Naive thymus-derived CD4-positive, alpha-beta T cell (primary cell): ENCODE measurements at regions of chr11 and their contacts with region 1.

Region 1: DNA sequence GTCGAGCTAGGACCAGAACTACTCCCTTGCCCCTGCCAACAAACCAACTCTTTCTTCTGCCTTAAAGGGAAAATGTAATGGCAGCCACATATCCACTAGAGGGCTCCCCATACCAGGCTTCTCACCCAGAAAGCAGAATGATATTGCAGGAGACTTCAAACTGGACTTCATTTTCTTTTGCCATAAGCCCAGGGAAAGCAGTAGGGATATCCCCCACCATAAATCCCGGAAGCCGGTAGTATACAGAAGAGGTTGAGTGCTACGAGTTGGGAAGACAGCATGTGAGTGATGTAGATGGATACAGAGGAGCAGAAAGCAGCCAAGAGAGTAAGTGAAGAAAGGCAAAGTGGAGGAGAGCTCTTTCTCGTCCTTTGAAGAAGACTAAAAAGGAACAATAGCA is 12.1 kb downstream of the PLAAT5 start:
- DNase-seq: peak; percentile 20 to 74 (median 65)
- ATAC-seq: peak; percentile 82
- H3K4me3 ChIP-seq: no peak overlapping the region
- H3K4me3 Mint-ChIP-seq: no peak overlapping the region
- H3K27ac ChIP-seq: no peak overlapping the region
- H3K27ac Mint-ChIP-seq: no peak overlapping the region
- H3K4me1 ChIP-seq: no peaks in the 10 kb centered on the region
- H3K4me1 Mint-ChIP-seq: no peaks in the 10 kb centered on the region
- H3K27me3 ChIP-seq: no peaks in the 10 kb centered on the region
- H3K27me3 Mint-ChIP-seq: peaks cover 0 to 43% (median 6%) of the 10 kb centered on the region in 5 donors

Region 2: GRCh38 chr11:63032457-63032856 is 446.4 kb before region 1 on chr11:
- CTCF ChIA-PET with region 1: no interaction called
- POLR2A ChIA-PET with region 1: no interaction called
- intact Hi-C with region 1: loop called (anchors 2 to 10 kb)
- DNase-seq: no peak
- ATAC-seq: no peak
- H3K4me3 ChIP-seq: no peak overlapping the region
- H3K4me3 Mint-ChIP-seq: no peak overlapping the region
- H3K27ac ChIP-seq: no peak overlapping the region
- H3K27ac Mint-ChIP-seq: no peak overlapping the region
- H3K4me1 ChIP-seq: no peaks in the 10 kb centered on the region
- H3K4me1 Mint-ChIP-seq: peaks cover 0 to 6% (median 0%) of the 10 kb centered on the region in 7 donors
- H3K27me3 ChIP-seq: no peaks in the 10 kb centered on the region
- H3K27me3 Mint-ChIP-seq: peaks cover 15 to 27% (median 21%) of the 10 kb centered on the region in 5 donors

Region 3: DNA sequence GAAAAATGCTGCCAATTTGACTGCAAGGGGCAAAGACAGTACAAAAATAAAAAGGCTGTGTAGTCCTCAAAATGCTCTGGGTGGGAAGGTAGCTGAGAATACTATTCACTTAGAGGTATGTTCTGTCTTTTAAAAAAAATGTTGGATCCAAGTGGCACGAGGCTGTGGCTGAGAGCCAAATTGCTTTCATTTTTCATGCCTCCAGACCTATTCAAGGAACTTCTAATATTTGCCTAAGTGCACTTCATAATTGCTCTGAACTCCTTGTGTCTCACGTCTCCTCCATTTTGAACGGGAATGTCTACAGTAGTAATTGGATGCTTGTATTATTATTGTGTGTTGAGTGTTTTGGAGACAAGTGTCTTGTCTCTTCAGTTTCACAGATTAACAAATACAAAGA is 216.3 kb before region 1 on chr11:
- CTCF ChIA-PET with region 1: no interaction called
- POLR2A ChIA-PET with region 1: no interaction called
- intact Hi-C with region 1: no loop called
- DNase-seq: no peak
- ATAC-seq: no peak
- H3K4me3 ChIP-seq: no peak overlapping the region
- H3K4me3 Mint-ChIP-seq: no peak overlapping the region
- H3K27ac ChIP-seq: no peak overlapping the region
- H3K27ac Mint-ChIP-seq: no peak overlapping the region
- H3K4me1 ChIP-seq: no peaks in the 10 kb centered on the region
- H3K4me1 Mint-ChIP-seq: peaks cover 0 to 7% (median 0%) of the 10 kb centered on the region in 7 donors
- H3K27me3 ChIP-seq: no peaks in the 10 kb centered on the region
- H3K27me3 Mint-ChIP-seq: peaks cover 7 to 33% (median 17%) of the 10 kb centered on the region in 5 donors

Region 4: DNA sequence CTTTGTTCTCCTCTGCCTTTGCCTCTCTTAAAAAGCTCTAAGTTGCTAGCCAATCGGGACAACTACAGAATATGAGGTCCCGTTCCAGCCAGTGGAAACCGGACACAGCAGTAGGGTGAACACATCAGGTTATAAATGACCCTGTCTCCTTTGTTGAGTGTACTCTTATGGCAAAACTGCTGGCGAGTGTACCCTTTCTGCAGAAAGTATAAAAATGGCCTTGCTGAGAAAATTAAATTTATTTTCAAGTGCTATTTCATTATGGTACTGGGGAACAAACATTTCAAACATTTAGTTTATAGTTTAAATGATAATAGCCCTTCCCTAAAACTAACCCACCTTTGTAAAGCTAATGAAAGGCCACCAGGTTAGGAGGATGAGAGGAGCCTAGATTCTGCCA is 21.0 kb after region 1 on chr11:
- CTCF ChIA-PET with region 1: no interaction called
- POLR2A ChIA-PET with region 1: no interaction called
- intact Hi-C with region 1: no loop called
- DNase-seq: no peak
- ATAC-seq: no peak
- H3K4me3 ChIP-seq: no peak overlapping the region
- H3K4me3 Mint-ChIP-seq: no peak overlapping the region
- H3K27ac ChIP-seq: no peak overlapping the region
- H3K27ac Mint-ChIP-seq: no peak overlapping the region
- H3K4me1 ChIP-seq: peaks cover 0 to 6% of the 10 kb centered on the region in 2 donors
- H3K4me1 Mint-ChIP-seq: peaks cover 4 to 22% (median 14%) of the 10 kb centered on the region in 7 donors
- H3K27me3 ChIP-seq: no peaks in the 10 kb centered on the region
- H3K27me3 Mint-ChIP-seq: peaks cover 20 to 32% (median 29%) of the 10 kb centered on the region in 5 donors

Region 5: DNA sequence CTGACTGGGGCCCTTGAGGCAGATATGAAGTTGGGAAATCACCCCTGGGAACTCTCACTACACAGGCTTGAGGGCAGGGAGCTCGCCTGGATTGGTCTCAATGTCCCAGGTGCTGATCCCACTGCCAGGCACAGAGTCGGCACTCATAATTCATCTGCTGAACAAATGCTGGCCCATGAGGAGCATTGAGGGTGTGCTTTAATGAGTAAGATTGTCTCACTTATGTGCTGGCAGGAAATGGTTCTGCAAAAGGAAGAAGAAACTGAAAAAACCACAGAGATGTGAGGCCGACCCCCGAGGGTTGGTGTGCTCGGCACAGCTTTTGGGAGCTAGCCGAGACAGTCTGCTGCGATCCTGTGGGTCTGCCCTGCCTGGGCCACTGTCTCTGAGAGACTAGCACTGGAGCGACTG is 74.8 kb after region 1 on chr11:
- CTCF ChIA-PET with region 1: interaction called, 10 read pairs
- POLR2A ChIA-PET with region 1: interaction called, 5 read pairs
- intact Hi-C with region 1: no loop called
- DNase-seq: peak in 7 of 9 donors; percentile 41 to 61 (median 53)
- ATAC-seq: peak; percentile 85
- H3K4me3 ChIP-seq: peak overlapping the region; percentile 51
- H3K4me3 Mint-ChIP-seq: peak overlapping the region; percentile 78 to 95 (median 88)
- H3K27ac ChIP-seq: peak overlapping the region; percentile 54
- H3K27ac Mint-ChIP-seq: peak overlapping the region; percentile 88 to 100 (median 96)
- H3K4me1 ChIP-seq: peaks cover 35 to 51% of the 10 kb centered on the region in 2 donors
- H3K4me1 Mint-ChIP-seq: peaks cover 33 to 81% (median 77%) of the 10 kb centered on the region in 7 donors
- H3K27me3 ChIP-seq: no peaks in the 10 kb centered on the region
- H3K27me3 Mint-ChIP-seq: no peaks in the 10 kb centered on the region

Region 6: GRCh38 chr11:63567044-63567840 is 88.3 kb after region 1 on chr11:
- CTCF ChIA-PET with region 1: interaction called, 3 read pairs
- POLR2A ChIA-PET with region 1: interaction called, 3 read pairs
- intact Hi-C with region 1: loop called in 1 of 2 experiments (anchors 5 kb)
- DNase-seq: peak in 8 of 9 donors; percentile 31 to 84 (median 62)
- ATAC-seq: peak; percentile 88
- H3K4me3 ChIP-seq: no peak overlapping the region
- H3K4me3 Mint-ChIP-seq: peak overlapping the region in 9 of 10 donors; percentile 7 to 62 (median 42)
- H3K27ac ChIP-seq: peak overlapping the region; percentile 44
- H3K27ac Mint-ChIP-seq: peak overlapping the region; percentile 56 to 94 (median 86)
- H3K4me1 ChIP-seq: peaks cover 22 to 25% of the 10 kb centered on the region in 2 donors
- H3K4me1 Mint-ChIP-seq: peaks cover 26 to 55% (median 47%) of the 10 kb centered on the region in 7 donors
- H3K27me3 ChIP-seq: no peaks in the 10 kb centered on the region
- H3K27me3 Mint-ChIP-seq: peaks cover 0 to 19% (median 0%) of the 10 kb centered on the region in 5 donors

Region 7: GRCh38 chr11:63573881-63574855 is 95.3 kb after region 1 on chr11:
- CTCF ChIA-PET with region 1: interaction called, 9 read pairs
- POLR2A ChIA-PET with region 1: no interaction called
- intact Hi-C with region 1: loop called (anchors 1 to 5 kb)
- DNase-seq: peak in 4 of 9 donors; percentile 30 to 41 (median 35)
- ATAC-seq: peak; percentile 82
- H3K4me3 ChIP-seq: peak overlapping the region; percentile 43
- H3K4me3 Mint-ChIP-seq: peak overlapping the region; percentile 77 to 95 (median 88)
- H3K27ac ChIP-seq: peak overlapping the region; percentile 33
- H3K27ac Mint-ChIP-seq: peak overlapping the region; percentile 81 to 99 (median 93)
- H3K4me1 ChIP-seq: peaks cover 12 to 13% of the 10 kb centered on the region in 2 donors
- H3K4me1 Mint-ChIP-seq: peaks cover 18 to 40% (median 30%) of the 10 kb centered on the region in 7 donors
- H3K27me3 ChIP-seq: no peaks in the 10 kb centered on the region
- H3K27me3 Mint-ChIP-seq: peaks cover 0 to 19% (median 0%) of the 10 kb centered on the region in 5 donors

Region 8: GRCh38 chr11:63599211-63600122 is 120.6 kb after region 1 on chr11:
- CTCF ChIA-PET with region 1: no interaction called
- POLR2A ChIA-PET with region 1: no interaction called
- intact Hi-C with region 1: no loop called
- DNase-seq: no peak
- ATAC-seq: no peak
- H3K4me3 ChIP-seq: no peak overlapping the region
- H3K4me3 Mint-ChIP-seq: no peak overlapping the region
- H3K27ac ChIP-seq: no peak overlapping the region
- H3K27ac Mint-ChIP-seq: peak overlapping the region in 1 of 9 donors; percentile 23
- H3K4me1 ChIP-seq: no peaks in the 10 kb centered on the region
- H3K4me1 Mint-ChIP-seq: peaks cover 0 to 6% (median 0%) of the 10 kb centered on the region in 7 donors
- H3K27me3 ChIP-seq: no peaks in the 10 kb centered on the region
- H3K27me3 Mint-ChIP-seq: peaks cover 0 to 2% (median 0%) of the 10 kb centered on the region in 5 donors

Region 9: GRCh38 chr11:63621931-63622782 is 143.3 kb after region 1 on chr11:
- CTCF ChIA-PET with region 1: interaction called, 12 read pairs
- POLR2A ChIA-PET with region 1: no interaction called
- intact Hi-C with region 1: no loop called
- DNase-seq: no peak
- ATAC-seq: no peak
- H3K4me3 ChIP-seq: no peak overlapping the region
- H3K4me3 Mint-ChIP-seq: no peak overlapping the region
- H3K27ac ChIP-seq: no peak overlapping the region
- H3K27ac Mint-ChIP-seq: no peak overlapping the region
- H3K4me1 ChIP-seq: no peaks in the 10 kb centered on the region
- H3K4me1 Mint-ChIP-seq: peaks cover 0 to 9% (median 7%) of the 10 kb centered on the region in 7 donors
- H3K27me3 ChIP-seq: no peaks in the 10 kb centered on the region
- H3K27me3 Mint-ChIP-seq: peaks cover 0 to 5% (median 0%) of the 10 kb centered on the region in 5 donors

Region 10: DNA sequence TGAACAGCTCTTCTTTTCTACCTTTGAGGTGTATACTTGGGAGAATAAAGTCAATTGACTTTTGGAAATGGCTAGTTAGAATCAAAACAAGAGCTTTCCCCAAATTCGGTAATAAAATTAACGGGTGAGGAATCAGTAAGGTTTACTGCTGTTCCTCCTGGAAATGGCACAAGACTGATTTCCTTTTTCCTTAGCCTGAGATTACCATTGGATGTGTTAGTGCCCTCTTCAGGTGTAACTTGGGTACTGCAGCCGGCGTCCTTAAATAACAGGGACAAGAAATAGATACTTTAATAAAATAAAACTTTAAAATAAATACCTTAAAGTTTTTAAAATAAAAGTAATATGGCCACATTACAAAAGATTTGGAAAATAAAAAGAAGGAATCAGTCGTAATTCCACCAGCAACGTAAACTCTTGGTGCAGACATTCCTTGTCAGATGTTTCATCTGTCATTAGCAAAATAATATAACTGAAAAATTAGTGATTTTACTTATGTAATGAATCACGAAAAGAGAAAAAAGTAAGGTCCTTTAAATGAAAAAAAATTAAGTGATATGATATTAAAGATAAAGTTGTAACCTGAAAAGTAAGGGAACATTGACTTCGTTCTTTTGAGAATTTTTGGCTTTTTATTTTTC is 259.9 kb after region 1 on chr11:
- CTCF ChIA-PET with region 1: interaction called, 26 read pairs
- POLR2A ChIA-PET with region 1: no interaction called
- intact Hi-C with region 1: loop called (anchors 1 to 2 kb)
- DNase-seq: peak in 8 of 9 donors; percentile 23 to 64 (median 46)
- ATAC-seq: peak; percentile 70
- H3K4me3 ChIP-seq: no peak overlapping the region
- H3K4me3 Mint-ChIP-seq: no peak overlapping the region
- H3K27ac ChIP-seq: no peak overlapping the region
- H3K27ac Mint-ChIP-seq: peak overlapping the region in 3 of 9 donors; percentile 29 to 67 (median 45)
- H3K4me1 ChIP-seq: no peaks in the 10 kb centered on the region
- H3K4me1 Mint-ChIP-seq: peaks cover 3 to 8% (median 4%) of the 10 kb centered on the region in 7 donors
- H3K27me3 ChIP-seq: no peaks in the 10 kb centered on the region
- H3K27me3 Mint-ChIP-seq: no peaks in the 10 kb centered on the region

Region 11: GRCh38 chr11:63938479-63939396 is 459.8 kb after region 1 on chr11 and contains the start of gene NAA40:
- CTCF ChIA-PET with region 1: no interaction called
- POLR2A ChIA-PET with region 1: no interaction called
- intact Hi-C with region 1: no loop called
- DNase-seq: peak; percentile 78 to 91 (median 84)
- ATAC-seq: peak; percentile 92
- H3K4me3 ChIP-seq: peak within 1 kb of the TSS; percentile 84
- H3K4me3 Mint-ChIP-seq: peak within 1 kb of the TSS; percentile 80 to 99 (median 94)
- H3K27ac ChIP-seq: peak within 1 kb of the TSS; percentile 73
- H3K27ac Mint-ChIP-seq: peak within 1 kb of the TSS; percentile 81 to 95 (median 89)
- H3K4me1 ChIP-seq: peaks cover 11 to 18% of the 10 kb centered on the region in 2 donors
- H3K4me1 Mint-ChIP-seq: peaks cover 22 to 28% (median 27%) of the 10 kb centered on the region in 7 donors
- H3K27me3 ChIP-seq: no peaks in the 10 kb centered on the region
- H3K27me3 Mint-ChIP-seq: peaks cover 0 to 2% (median 0%) of the 10 kb centered on the region in 5 donors
- total RNA-seq, gene NAA40: 21.0 to 39.8 (median 24.8) TPM